Lower leg skin (tissue), 4 donors: ENCODE measurements at regions of chr2 and their contacts with region 1.

Region 1: DNA sequence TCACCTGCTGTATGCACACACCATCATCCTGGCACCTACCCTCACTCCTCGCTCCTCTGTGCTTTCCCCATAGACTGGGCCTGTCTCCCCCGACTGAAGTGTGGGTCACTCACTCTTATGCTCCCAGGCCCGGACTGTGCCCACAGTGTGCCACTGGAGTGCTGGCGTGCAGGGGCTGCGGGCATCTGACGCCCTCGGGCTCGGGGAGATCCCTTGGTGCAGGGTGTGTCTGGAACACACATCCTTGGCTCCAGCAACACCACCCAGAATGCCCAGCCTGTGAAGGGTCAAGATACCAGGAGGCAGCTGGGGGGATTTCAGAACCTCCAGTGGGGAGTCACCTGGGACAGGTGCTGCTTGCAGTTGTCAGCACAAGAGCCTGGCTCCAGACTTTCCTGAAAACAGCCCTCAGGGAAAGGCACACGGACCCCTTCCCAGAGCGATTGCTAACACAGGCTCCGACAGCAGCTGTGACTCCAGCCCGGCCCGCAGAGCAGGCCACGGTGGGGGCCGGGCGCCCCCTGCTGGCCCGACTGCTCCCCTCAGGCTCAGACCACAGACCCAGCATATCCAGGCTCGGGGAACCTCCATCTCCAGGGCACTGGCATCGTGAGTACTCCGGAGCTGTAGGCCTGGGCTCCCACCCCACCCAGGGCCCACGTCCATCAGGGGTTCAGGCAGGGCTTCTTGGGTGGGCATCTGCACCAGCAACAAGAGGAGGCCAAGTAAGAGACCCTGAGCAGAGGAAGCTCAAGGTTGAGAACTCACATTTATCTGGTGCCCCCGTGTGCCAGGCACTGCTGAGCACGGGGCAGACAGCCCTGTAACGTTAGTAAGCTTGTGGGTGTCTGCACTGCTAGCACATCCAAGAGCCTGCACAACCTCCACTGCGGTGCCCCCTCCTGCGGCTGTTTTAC is 8.6 kb downstream of the HS1BP3 start:
- DNase-seq: peak; percentile 67 to 96
- H3K4me3 ChIP-seq: no peak overlapping the region
- CTCF ChIP-seq: peak in 1 of 3 donors; percentile 72
- POLR2A ChIP-seq: no peak

Region 2: DNA sequence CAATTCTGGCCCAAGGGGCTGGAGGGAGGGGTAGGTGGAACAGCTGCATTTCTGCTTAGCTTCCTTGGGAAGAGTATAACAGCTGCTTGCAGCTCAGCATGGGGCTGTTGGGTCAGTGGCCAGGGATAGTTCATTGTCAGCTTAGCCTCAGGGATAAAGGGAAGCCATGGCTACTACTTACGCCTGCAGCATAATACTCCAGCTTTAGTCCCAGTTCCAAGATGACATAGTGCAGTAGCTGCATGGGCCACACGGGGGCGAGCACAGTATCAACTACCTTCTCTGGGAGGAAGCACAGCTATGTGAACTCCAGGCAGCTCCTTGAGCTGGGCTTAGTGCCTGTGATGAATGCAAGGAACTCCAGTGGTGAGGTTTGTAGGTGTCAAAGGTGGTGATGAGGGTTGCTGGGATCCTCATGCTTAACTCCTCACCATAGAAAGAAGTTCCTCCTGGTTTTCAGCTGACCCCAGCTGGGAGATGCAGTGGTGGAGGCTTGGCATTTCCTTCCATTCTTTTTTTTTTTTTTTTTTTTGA is 230.9 kb before region 1 on chr2:
- intact Hi-C with region 1: no loop called
- DNase-seq: peak; percentile 89 to 98
- H3K4me3 ChIP-seq: no peak overlapping the region
- CTCF ChIP-seq: peak in 1 of 3 donors; percentile 78
- POLR2A ChIP-seq: no peak

Region 3: GRCh38 chr2:20446917-20447436 is 195.3 kb before region 1 on chr2 and contains the start of gene RHOB:
- intact Hi-C with region 1: loop called (anchors 10 kb)
- DNase-seq: peak; percentile 98 to 100
- H3K4me3 ChIP-seq: peak within 1 kb of the TSS; percentile 56
- CTCF ChIP-seq: no peak
- POLR2A ChIP-seq: peak in 1 of 2 donors; percentile 98
- total RNA-seq, gene RHOB: 569 to 894 (median 709) TPM